ENCODE measurements at regions of chr1 and their contacts with region 1.

Region 1: DNA sequence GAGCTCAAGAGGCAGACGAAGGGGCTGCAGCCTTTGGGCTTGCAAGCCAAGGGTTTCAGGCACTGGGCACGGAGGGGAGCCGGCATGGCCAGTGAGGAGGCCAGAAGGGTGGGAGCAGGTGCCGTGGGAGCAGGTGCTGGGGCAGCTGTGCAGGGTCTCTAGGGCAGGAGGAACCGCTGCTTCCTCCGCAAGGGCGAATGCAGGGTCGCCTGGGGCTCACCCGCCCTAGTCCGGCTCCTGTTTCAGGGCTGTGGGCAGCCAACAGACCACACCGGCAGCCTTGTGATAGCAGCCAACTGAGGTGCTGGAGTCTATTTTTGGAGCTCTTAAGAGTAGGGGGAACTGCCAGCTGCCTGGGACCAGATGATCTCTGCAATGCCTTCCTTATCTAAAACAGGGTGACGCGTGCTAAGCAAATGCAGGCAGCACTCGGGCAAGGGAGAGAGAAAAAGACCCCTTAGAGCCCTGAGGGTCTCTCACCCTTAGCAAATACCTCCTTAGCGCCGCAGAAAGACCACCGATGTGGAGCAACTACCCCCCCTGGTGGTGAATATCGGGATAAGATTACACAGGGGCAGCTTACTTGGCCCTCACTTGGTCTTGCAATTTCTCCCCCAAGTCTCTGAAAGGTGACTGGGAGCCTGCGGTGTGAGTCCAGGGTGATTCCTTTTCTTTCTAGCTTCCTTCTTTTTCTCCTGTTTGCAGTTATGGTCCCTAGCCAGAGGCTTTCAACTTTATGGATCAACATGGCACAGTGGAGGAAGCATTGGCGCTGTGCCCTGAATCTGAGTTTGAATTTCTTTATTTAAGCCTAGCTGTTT is 20.7 kb upstream of the MAPKAPK2 start:
- DNase-seq: no peak
- H3K4me3 ChIP-seq: no peak overlapping the region; the same call in 1 of the 2 replicates
- CTCF ChIP-seq: peak; percentile 66

Region 2: GRCh38 chr1:206496131-206496793 is 167.8 kb before region 1 on chr1:
- CTCF ChIA-PET with region 1: interaction called, 107 read pairs
- POLR2A ChIA-PET with region 1: no interaction called
- DNase-seq: no peak
- H3K4me3 ChIP-seq: no peak overlapping the region
- CTCF ChIP-seq: no peak

Region 3: DNA sequence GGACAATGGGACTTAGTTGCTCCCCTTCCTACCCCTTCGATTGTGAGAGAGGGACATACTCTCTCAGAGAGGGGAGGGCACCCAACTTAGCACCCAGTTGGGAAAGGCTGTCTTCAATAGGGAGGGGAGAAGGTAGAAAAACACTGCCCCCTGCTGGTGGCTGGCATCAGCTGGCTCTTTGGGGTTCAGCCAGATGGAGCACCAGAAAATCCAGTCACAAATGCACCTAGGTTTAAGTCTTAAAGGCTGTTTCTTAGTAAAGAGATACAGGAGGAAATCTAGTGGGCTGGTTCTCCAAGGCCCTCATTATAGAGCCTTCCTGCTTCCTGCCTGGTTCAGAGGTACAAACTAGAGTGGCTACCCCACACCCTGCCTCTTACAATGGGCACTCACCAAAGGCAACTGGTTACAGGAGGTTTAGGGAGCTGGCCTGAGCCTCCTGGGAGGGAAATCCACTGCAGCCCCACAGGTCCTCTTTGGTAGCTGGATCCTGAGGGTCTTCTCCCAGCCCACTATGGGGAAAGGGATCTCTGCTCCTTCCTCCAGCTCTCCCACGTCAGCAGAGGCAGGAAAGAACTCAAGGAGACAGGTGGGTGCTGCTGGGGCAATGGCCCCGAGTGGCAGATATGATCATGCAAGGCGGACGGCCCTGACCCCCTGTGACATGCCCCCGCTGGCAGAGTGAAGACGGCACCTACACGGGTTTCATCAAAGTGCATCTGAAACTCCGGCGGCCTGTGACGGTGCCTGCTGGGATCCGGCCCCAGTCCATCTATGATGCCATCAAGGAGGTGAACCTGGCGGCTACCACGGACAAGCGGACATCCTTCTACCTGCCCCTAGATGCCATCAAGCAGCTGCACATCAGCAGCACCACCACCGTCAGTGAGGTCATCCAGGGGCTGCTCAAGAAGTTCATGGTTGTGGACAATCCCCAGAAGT is 80.1 kb before region 1 on chr1:
- CTCF ChIA-PET with region 1: interaction called, 21 read pairs
- POLR2A ChIA-PET with region 1: no interaction called
- DNase-seq: no peak
- H3K4me3 ChIP-seq: no peak overlapping the region
- CTCF ChIP-seq: peak; percentile 72

Region 4: GRCh38 chr1:206612129-206612876 is 51.7 kb before region 1 on chr1 and contains the start of gene EIF2D:
- CTCF ChIA-PET with region 1: interaction called, 265 read pairs
- POLR2A ChIA-PET with region 1: no interaction called
- DNase-seq: no peak
- H3K4me3 ChIP-seq: peak within 1 kb of the TSS; percentile 95
- CTCF ChIP-seq: peak; percentile 99

Region 5: DNA sequence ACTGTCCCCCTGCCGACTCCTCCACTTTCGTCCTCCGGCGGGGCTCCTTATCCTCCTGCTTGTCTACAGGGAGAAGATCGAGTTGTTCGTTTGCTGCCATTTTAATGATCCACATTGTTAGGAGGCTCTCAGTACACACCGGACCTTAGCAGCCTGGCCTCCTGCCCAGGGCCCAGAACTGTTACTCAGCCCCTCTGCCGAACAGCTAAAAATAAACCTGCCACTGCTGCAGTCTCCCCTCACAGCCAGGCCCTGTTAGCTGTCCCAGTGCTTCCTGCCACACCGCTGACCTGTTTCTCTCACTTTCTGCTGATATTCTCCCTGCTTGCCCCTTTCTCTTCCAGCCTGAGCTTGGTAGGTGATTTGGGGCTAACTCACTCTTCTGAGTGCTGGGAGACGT is 29.0 kb after region 1 on chr1:
- CTCF ChIA-PET with region 1: interaction called, 35 read pairs
- POLR2A ChIA-PET with region 1: no interaction called
- DNase-seq: no peak
- H3K4me3 ChIP-seq: peak overlapping the region; percentile 6; the same call in 1 of the 2 replicates
- CTCF ChIP-seq: no peak

Region 6: GRCh38 chr1:206982216-206982615 is 318.2 kb after region 1 on chr1:
- CTCF ChIA-PET with region 1: interaction called, 14 read pairs
- POLR2A ChIA-PET with region 1: no interaction called
- DNase-seq: no peak
- H3K4me3 ChIP-seq: no peak overlapping the region
- CTCF ChIP-seq: peak; percentile 65